Thyroid gland (tissue), 4 donors: ENCODE measurements at regions of chr3 and their contacts with region 1.

Region 1: GRCh38 chr3:4978204-4978965 is 852 bp upstream of the BHLHE40 start:
- DNase-seq: peak; percentile 98
- H3K4me3 ChIP-seq: peak overlapping the region; percentile 4 to 61 (median 38)
- H3K27ac ChIP-seq: peak overlapping the region; percentile 96 to 100 (median 100)
- H3K4me1 ChIP-seq: peaks cover 47 to 51% of the 10 kb centered on the region in 2 donors
- H3K27me3 ChIP-seq: no peaks in the 10 kb centered on the region
- CTCF ChIP-seq: no peak
- POLR2A ChIP-seq: peak; percentile 16 to 79

Region 2: GRCh38 chr3:4826237-4827100 is 151.9 kb before region 1 on chr3:
- intact Hi-C with region 1: loop called (anchors 10 kb)
- DNase-seq: peak; percentile 83 to 86
- H3K4me3 ChIP-seq: no peak overlapping the region
- H3K27ac ChIP-seq: peak overlapping the region; percentile 90 to 94 (median 92)
- H3K4me1 ChIP-seq: peaks cover 66 to 71% of the 10 kb centered on the region in 2 donors
- H3K27me3 ChIP-seq: no peaks in the 10 kb centered on the region
- CTCF ChIP-seq: no peak
- POLR2A ChIP-seq: no peak